ENCODE measurements at regions of chr6 and their contacts with region 1.

Region 1: DNA sequence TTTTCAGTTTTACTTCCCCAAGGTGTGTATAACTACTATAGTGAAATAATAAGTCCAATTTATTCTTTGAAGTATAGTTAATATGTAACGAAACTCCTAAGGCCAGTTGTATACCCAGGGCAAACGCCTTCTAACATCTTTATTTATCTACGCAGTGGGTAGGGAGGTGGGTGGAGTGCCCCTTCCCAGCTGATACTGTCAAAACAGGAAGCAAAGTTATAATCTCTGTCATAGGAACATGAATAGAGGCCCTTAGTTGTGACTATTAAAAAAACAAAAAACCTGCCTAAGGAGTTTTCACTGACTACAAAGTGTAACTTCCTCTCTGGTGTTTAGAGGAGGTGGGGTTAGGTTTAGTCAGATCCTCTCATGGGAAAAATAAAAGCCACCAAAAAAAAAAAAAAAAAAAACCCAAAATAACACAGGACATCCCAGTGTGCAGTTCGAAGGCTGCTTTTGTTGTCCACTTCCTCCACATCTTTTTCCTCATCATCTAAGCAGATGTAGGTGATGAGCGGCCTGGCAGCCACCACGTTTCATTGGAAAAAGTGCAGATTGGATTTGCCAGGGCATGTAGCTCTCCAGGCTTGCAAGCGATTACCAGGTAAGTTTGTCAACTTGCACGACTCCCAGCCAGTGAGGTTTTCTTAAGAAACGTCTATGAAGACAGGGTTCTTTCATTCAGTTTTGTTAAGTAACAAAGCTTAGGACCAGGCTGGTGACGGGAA is 58.7 kb downstream of the UTRN start:
- DNase-seq: peak; percentile 51
- ATAC-seq: peak; percentile 64
- H3K4me3 Mint-ChIP-seq: peak overlapping the region; percentile 90
- H3K27ac Mint-ChIP-seq: peak overlapping the region; percentile 92
- H3K4me1 Mint-ChIP-seq: peaks cover 55% of the 10 kb centered on the region
- H3K27me3 Mint-ChIP-seq: no peaks in the 10 kb centered on the region

Region 2: DNA sequence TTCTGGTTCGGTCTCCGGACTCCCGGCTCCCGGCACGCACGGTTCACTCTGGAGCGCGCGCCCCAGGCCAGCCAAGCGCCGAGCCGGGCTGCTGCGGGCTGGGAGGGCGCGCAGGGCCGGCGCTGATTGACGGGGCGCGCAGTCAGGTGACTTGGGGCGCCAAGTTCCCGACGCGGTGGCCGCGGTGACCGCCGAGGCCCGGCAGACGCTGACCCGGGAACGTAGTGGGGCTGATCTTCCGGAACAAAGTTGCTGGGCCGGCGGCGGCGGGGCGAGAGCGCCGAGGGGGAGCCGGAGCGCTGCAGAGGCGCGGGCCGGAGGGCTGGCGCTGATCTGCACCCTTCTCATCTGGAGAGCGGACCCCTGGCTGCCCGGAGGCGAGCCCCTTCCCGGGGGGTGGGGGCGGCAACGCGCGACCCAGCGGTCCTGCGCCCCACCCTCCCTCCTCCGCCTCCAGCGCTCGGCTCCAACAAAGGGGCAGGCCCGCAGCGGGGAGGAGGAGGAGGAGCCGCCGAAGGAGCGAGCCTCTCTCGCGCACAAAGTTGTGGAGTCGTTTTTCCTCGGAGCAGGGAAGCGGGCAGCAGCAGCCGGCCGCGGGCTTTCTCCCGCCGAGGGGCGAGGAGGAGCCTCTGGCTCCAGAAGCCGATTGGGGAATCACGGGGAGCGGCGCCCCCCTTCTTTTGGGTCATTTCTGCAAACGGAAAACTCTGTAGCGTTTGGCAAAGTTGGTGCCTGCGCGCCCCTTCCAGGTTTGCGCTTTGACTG is 58.9 kb before region 1 on chr6 and contains the start of gene UTRN:
- POLR2A ChIA-PET with region 1: interaction called, 11 read pairs
- DNase-seq: peak; percentile 74
- ATAC-seq: peak; percentile 68
- H3K4me3 Mint-ChIP-seq: peak within 1 kb of the TSS; percentile 95
- H3K27ac Mint-ChIP-seq: peak within 1 kb of the TSS; percentile 89
- H3K4me1 Mint-ChIP-seq: peaks cover 24% of the 10 kb centered on the region
- H3K27me3 Mint-ChIP-seq: peaks cover 3% of the 10 kb centered on the region
- total RNA-seq, gene UTRN: 179 to 199 TPM

Region 3: GRCh38 chr6:144411332-144412190 is 67.7 kb after region 1 on chr6:
- POLR2A ChIA-PET with region 1: no interaction called
- DNase-seq: no peak
- ATAC-seq: peak; percentile 45
- H3K4me3 Mint-ChIP-seq: peak overlapping the region; percentile 66
- H3K27ac Mint-ChIP-seq: peak overlapping the region; percentile 77
- H3K4me1 Mint-ChIP-seq: peaks cover 27% of the 10 kb centered on the region
- H3K27me3 Mint-ChIP-seq: no peaks in the 10 kb centered on the region

Measured in activated naive CD8-positive, alpha-beta T cell treated with anti-CD3 and anti-CD28 coated beads, Interleukin-2, amount 10 ng/mL, durations not matched to agents 7 days and 5 days (primary cell).